ENCODE measurements at regions of chr1 and their contacts with region 1.

Region 1: GRCh38 chr1:201559679-201560162 is 20.8 kb downstream of the NAV1 start:
- DNase-seq: peak; percentile 94

Region 2: DNA sequence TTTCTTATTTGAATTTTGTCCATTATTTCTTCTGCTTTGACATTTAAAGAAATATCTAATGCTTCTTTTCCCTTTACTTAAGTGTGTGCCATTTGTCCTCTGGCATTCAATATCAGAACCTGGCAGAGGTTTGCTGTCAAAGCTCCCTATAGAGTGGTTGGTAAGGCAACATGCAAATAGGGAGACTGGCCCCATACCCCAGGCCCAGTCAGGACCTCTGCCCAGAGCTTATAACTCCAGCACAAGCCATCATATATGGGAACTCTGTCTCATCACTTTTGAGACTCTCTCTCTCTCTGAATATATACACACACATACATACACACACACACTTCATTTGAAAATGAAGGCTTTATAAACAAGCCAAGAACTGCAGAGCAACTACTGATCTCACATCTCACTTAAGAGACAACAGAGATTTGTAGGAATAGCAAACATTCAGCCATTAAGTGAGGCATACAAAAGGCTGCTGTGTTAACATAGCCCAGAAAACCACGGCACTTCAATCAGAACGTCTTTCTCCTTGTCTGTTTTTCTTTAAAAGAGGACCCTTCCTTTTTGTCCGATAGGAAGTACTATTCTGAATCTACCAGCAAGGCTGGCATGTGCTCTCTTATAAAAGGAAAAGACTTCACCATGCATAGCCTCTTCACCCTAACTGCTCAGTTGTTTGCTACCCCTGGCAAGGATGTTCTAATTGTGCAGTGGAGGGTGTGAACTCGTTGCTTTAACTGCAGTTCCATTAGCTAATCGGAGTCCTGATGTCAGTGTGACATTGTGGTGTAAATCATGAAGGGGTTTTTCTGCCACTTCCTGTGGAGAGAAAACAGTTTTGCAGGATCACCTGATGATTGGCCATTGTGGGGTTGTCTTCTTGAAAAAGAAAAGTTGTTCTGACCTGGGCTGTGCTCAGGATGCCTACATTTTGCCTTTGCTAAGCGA is 1430.5 kb before region 1 on chr1:
- intact Hi-C with region 1: no loop called
- DNase-seq: no peak

Region 3: GRCh38 chr1:201703621-201704439 is 144.1 kb after region 1 on chr1:
- intact Hi-C with region 1: loop called (anchors 2 to 5 kb)
- DNase-seq: peak; percentile 95

Region 4: GRCh38 chr1:201792534-201793305 is 233.0 kb after region 1 on chr1:
- intact Hi-C with region 1: loop called in 1 of 2 experiments (anchors 2 kb)
- DNase-seq: no peak

Region 5: DNA sequence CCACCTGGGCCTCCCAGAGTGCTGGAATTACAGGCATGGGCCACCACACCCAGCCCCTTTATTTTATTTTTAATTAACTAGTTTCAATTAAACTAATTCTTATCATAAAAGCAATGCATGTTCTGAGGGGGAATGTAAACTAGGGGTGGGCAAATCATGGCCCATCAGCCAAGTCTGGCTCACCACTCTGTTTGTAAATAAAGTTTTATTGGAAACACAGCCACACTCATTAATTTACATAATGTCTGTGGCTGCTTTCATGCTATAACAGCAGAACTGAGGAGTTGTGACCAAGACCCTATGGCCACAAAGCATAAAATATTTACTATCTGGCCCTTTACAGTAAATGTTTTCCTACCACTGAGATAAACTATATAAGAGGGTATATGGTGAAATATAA is 240.5 kb after region 1 on chr1:
- intact Hi-C with region 1: loop called in 1 of 2 experiments (anchors 5 kb)
- DNase-seq: no peak